ENCODE measurements at regions of chr5 and their contacts with region 1.

Region 1: DNA sequence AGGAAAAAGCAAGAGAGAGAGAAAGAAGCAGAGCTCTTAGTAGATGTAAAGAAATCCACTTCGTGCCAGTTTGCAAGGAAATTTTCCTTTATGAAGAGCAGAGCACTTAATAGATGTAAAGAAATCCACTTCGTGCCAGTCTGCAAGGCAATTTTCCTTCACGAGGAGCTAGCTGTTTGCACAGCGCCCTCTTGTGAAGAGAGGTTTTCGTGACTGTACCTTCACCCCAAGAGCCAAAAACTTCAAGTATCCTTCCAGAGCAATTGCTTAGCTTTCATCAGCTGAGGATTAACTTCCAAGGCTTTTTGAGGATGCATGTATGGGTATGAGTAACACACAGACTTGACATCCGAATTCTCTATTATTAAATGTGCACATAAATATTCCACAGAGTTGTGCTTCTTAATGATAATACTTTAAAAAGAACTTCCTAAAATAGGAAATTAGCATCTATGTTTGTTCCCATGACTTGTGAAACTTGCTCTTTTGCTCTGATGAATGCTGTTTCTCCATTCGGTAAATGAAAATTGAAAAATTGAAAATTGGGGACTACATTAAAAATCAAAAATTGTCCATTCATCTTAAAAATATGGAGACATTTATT is 525.6 kb downstream of the PDE4D start:
- DNase-seq: peak; percentile 64
- H3K4me3 Mint-ChIP-seq: no peak overlapping the region
- H3K27ac Mint-ChIP-seq: no peak overlapping the region
- H3K4me1 Mint-ChIP-seq: no peaks in the 10 kb centered on the region
- H3K27me3 Mint-ChIP-seq: peaks cover 10% of the 10 kb centered on the region

Region 2: GRCh38 chr5:59356813-59357380 is 11.0 kb before region 1 on chr5:
- CTCF ChIA-PET with region 1: interaction called, 11 read pairs
- DNase-seq: no peak
- H3K4me3 Mint-ChIP-seq: no peak overlapping the region
- H3K27ac Mint-ChIP-seq: no peak overlapping the region
- H3K4me1 Mint-ChIP-seq: no peaks in the 10 kb centered on the region
- H3K27me3 Mint-ChIP-seq: peaks cover 14% of the 10 kb centered on the region

Region 3: GRCh38 chr5:59380350-59380951 is 12.6 kb after region 1 on chr5:
- CTCF ChIA-PET with region 1: interaction called, 10 read pairs
- DNase-seq: peak; percentile 23
- H3K4me3 Mint-ChIP-seq: no peak overlapping the region
- H3K27ac Mint-ChIP-seq: no peak overlapping the region
- H3K4me1 Mint-ChIP-seq: no peaks in the 10 kb centered on the region
- H3K27me3 Mint-ChIP-seq: peaks cover 6% of the 10 kb centered on the region